ENCODE measurements at regions of chr15 and their contacts with region 1.

Region 1: DNA sequence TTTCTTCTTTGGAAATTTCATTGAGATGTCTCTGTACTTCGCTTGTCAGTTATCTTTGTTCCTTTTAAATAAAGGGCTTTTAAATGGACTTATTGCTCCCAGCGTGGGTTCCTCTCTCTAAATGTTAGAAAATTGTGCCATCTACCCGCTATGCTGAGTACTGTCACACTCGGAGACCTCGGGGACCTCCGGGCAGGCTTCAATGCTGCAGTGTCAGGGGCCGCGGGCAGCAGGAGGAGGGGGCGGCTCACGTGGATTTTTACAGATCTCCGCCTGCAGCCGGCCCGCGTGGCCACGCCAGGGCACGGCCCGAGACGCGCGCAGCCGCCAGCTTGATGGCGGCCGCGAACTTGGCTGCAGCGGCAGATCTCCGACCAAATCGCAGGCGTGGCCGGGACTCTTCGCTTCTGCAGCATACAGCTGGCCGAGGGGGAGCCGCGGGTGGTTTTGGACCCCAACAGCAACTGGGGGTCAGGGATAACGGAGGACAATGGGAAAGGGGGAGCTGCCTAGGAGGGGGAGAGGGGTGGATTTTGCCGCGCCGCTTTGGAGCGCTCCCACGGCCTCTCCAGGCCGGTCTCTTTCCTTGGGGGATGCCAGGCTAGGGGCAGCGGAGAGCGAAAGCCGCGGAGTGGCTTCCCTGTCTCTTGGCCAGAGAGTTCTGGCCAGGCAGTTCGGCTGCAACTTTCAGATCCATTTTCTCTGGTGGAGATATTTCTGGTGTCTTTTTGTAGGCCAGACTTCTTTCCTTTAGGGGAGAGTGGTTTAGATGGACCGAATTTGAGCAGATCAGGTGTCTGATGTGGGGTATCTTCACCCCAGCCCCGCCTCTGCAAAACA is 15.3 kb downstream of the NR2F2 start:
- DNase-seq: peak; percentile 62
- CTCF ChIP-seq: peak; percentile 61

Region 2: GRCh38 chr15:96327155-96327741 is 18.5 kb before region 1 on chr15:
- CTCF ChIA-PET with region 1: interaction called, 21 read pairs
- POLR2A ChIA-PET with region 1: no interaction called
- DNase-seq: no peak
- CTCF ChIP-seq: no peak

Region 3: GRCh38 chr15:96374499-96374898 is 28.7 kb after region 1 on chr15:
- CTCF ChIA-PET with region 1: no interaction called
- POLR2A ChIA-PET with region 1: no interaction called
- DNase-seq: no peak
- CTCF ChIP-seq: no peak

Measured in GM10248 (cell line).